Dorsolateral prefrontal cortex (tissue), 120 donors: ENCODE measurements at regions of chr9 and their contacts with region 1.

Region 1: DNA sequence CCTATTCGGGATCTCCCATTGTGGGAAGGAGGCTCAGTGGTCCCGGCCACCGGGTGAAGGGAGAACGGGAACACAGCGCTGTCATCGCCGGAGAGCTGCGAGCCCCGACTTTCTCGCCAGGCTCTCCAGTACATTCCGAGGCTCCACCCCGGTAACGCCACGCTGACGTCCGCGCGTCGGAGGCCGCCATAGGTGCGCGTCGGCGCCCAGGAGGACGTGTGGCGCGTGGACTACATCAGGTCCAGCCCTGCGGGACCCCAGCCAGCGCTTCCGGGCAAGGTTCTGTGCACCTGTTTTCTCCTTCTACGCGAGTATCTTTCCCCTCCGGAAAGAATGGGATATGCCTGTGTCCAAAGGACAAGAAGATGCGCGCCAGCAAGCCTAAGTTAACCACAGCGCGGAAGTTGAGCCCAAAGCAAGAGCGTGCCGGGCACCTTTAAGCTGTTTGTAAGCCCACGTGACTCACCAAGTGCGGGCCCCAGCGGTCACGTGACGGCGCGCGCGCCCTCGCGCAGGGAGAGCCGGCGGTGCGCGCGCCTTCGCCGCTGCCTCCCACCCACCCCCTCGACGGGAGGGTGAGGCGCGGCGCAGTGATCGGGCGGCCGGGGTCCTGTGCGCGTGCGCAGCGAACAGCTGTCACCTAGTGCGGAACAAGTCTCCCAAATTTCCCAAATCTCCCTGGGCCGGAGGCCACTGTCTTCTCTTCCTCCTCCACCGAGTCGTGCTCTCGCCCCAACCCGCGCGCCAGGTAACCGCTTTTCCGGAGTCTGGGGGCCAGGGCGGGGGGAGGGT is at the start of gene KDM4C:
- DNase-seq: peak; percentile 89 to 96 (median 94)
- H3K4me3 ChIP-seq: peak within 1 kb of the TSS; percentile 61 to 100 (median 94)
- H3K27ac ChIP-seq: peak within 1 kb of the TSS; percentile 53 to 100 (median 98)
- H3K27me3 ChIP-seq: no peaks in the 10 kb centered on the region
- CTCF ChIP-seq: peak in 10 of 56 donors; percentile 9 to 33 (median 20)
- total RNA-seq, gene KDM4C: 44.2 to 96.0 (median 66.5) TPM

Region 2: GRCh38 chr9:6584881-6585597 is 172.6 kb before region 1 on chr9:
- intact Hi-C with region 1: loop called in 1 of 2 experiments (anchors 10 kb)
- DNase-seq: no peak
- H3K4me3 ChIP-seq: no peak overlapping the region
- H3K27ac ChIP-seq: no peak overlapping the region
- H3K27me3 ChIP-seq: no peaks in the 10 kb centered on the region
- CTCF ChIP-seq: peak; percentile 47 to 83 (median 65)

Region 3: DNA sequence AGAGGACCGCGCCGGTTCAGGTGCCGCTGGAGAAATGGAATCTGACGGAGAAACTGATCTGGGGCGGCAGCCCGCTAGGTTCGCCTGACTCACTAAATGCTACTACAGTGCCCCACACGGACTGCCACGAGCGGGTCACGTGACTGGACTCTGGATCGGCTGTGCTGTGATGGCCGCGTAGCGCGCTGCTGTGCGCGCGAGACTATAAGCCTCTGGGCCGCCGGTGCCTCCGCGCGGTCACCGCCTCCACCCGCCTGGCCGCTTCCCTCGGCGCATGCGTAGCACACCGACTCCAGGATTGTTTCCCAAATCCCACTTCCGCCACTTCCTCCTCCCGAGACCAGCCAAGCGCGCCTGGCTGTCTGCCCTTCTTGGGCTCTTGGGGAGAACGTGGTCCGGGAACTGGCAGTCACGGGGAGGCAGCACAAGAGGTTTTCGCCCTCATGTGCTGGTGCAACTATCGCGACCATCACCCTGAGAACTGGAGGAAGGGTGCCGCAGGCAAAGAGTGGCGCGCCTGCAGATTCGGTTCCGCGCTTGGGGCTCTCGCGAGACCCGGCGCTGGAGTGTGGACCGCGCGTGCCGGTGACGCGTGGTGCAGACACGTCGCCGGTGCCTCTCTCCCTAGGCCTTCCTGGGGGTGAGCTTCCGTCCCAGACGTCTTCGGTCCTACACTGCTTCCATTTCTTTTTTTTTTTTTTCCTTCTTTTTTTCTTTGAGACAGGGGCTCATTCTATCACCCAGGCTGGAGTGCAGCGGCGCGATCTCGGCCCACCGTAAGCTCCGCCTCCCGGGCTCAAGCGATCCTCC is 76.3 kb before region 1 on chr9:
- intact Hi-C with region 1: loop called (anchors 1 to 2 kb)
- DNase-seq: peak; percentile 93 to 98 (median 95)
- H3K4me3 ChIP-seq: peak overlapping the region; percentile 51 to 95 (median 80)
- H3K27ac ChIP-seq: peak overlapping the region; percentile 92 to 100 (median 99)
- H3K27me3 ChIP-seq: no peaks in the 10 kb centered on the region
- CTCF ChIP-seq: peak in 35 of 56 donors; percentile 4 to 52 (median 22)

Region 4: DNA sequence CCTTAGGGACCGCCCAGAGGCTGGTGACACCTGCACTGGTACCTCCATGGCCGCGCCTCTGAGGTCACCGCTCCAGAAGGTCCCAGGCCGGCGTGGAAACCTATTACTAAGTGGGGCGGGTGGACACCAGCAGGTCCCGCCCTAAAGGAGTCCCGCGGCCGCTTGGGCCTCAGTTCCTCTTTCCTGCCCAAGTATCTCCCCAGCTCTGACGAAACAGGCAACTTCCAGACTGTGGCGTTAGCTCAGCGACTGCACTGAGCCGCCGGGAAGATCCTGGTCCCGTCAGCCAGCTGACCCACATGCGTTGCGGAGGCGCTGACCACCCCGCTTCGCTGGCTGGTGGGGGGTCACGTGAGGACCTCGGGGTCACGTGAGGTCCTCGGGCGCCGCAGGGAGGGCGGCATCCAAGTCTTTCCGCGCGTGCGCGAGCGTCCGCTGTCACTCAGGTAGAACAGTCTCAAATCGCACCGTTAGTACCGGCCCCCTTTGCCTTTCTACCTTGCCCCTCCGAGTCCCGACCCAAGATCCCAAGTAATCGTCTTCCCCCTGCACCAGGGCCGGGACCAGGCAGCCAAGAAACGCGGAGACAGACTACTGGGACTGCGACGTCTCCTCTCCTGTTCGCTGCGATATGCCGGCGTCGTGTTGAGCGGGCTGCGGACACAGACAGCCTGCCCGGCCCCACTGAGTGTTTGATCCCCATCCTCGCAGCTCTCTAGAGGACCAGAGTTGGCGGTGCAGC is 53.6 kb before region 1 on chr9:
- intact Hi-C with region 1: loop called in 1 of 2 experiments (anchors 2 kb)
- DNase-seq: peak in 9 of 10 donors; percentile 71 to 92 (median 89)
- H3K4me3 ChIP-seq: peak overlapping the region in 57 of 59 donors; percentile 44 to 95 (median 77)
- H3K27ac ChIP-seq: peak overlapping the region in 57 of 59 donors; percentile 42 to 95 (median 86)
- H3K27me3 ChIP-seq: no peaks in the 10 kb centered on the region
- CTCF ChIP-seq: peak in 15 of 56 donors; percentile 12 to 49 (median 26)

Region 5: GRCh38 chr9:6781476-6781875 is 23.8 kb after region 1 on chr9:
- intact Hi-C with region 1: loop called in 1 of 2 experiments (anchors 1 kb)
- DNase-seq: peak in 1 of 10 donors; percentile 48
- H3K4me3 ChIP-seq: peak overlapping the region in 8 of 59 donors; percentile 6 to 24 (median 20)
- H3K27ac ChIP-seq: peak overlapping the region in 57 of 59 donors; percentile 12 to 91 (median 75)
- H3K27me3 ChIP-seq: no peaks in the 10 kb centered on the region
- CTCF ChIP-seq: peak in 3 of 56 donors; percentile 5 to 27 (median 8)